ENCODE measurements at regions of chr9 and their contacts with region 1.

Region 1: DNA sequence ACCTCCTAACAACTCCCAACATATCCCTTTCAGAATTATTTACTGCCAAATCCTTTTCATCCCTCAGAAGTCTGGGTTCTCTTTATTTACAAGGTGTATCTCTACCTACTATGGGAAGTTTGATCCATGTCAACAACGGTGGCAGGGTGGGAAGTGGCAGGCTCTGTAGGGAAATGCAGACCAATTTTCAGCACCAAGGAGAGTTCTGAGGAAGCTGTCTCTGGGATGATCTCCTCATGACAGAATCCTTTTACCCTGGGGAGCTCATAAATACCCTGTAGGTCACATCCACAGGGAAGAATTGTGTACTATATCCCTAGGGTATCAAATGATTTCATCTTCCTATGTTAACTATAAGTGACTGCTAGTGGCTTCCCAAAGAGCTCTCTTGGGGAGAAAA is 107.8 kb upstream of the NEK6 start:
- DNase-seq: no peak
- ATAC-seq: no peak
- H3K4me3 ChIP-seq: no peak overlapping the region
- H3K27ac ChIP-seq: no peak overlapping the region
- H3K4me1 ChIP-seq: no peaks in the 10 kb centered on the region
- H3K27me3 ChIP-seq: peaks cover 0 to 5% (median 0%) of the 10 kb centered on the region in 9 donors
- CTCF ChIP-seq: no peak
- POLR2A ChIP-seq: no peak

Region 2: DNA sequence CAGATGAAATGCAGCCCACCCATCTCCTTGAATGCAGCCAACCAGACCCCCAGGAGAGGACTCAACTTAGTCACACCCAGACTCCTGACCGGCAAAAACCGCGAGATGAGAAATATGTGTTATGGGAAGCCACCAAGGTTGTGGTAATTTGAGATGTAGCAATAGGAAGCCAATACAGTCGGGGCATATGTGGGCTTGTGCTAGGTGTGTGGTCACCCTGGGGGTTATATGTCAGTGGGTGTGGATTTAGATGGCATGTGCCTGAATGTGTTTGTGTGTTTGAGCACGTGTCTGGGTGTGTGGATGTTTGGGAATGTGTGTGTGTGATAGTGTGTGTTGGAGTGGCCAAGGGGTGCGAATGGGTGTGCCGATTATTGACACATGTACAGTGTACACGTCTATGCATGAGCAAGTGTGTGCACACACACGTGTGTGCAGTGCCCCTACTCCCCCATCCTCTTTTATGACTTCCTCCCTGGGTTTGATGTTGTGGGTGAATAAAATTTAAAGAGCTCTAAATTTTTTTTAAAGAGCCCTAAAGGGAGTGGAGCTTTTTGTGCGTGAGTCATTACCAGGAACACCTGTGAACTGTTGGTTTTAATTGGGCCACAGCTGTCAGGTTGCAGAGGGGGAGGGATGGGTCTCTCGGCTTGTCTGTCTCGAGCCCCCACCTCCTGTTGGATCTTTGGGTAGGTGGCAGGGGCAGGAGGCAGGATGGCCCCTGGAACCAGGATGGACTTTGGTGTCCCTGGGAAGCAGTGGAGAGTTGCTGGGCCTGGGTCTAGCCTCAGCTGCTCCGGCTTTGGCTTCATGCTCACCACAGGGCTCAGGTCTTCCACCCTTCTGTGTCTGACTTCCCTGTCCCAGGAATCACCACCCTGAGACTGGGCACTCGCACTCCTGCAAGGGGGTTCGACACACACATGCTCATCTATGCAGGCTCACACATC is 51.6 kb before region 1 on chr9:
- intact Hi-C with region 1: loop called in 1 of 10 experiments (anchors 10 kb)
- DNase-seq: no peak
- ATAC-seq: no peak
- H3K4me3 ChIP-seq: no peak overlapping the region
- H3K27ac ChIP-seq: no peak overlapping the region
- H3K4me1 ChIP-seq: no peaks in the 10 kb centered on the region
- H3K27me3 ChIP-seq: peaks cover 0 to 24% (median 7%) of the 10 kb centered on the region in 9 donors
- CTCF ChIP-seq: no peak
- POLR2A ChIP-seq: no peak

Region 3: GRCh38 chr9:124513376-124513994 is 363.5 kb after region 1 on chr9:
- intact Hi-C with region 1: loop called in 1 of 10 experiments (anchors 10 kb)
- DNase-seq: peak in 3 of 5 donors; percentile 52 to 67 (median 54)
- ATAC-seq: peak; percentile 88 to 91 (median 89)
- H3K4me3 ChIP-seq: no peak overlapping the region
- H3K27ac ChIP-seq: no peak overlapping the region
- H3K4me1 ChIP-seq: peaks cover 0 to 20% (median 1%) of the 10 kb centered on the region in 12 donors
- H3K27me3 ChIP-seq: no peaks in the 10 kb centered on the region
- CTCF ChIP-seq: no peak
- POLR2A ChIP-seq: no peak